Astrocyte of the cerebellum (primary cell): ENCODE measurements at regions of chr10 and their contacts with region 1.

Region 1: DNA sequence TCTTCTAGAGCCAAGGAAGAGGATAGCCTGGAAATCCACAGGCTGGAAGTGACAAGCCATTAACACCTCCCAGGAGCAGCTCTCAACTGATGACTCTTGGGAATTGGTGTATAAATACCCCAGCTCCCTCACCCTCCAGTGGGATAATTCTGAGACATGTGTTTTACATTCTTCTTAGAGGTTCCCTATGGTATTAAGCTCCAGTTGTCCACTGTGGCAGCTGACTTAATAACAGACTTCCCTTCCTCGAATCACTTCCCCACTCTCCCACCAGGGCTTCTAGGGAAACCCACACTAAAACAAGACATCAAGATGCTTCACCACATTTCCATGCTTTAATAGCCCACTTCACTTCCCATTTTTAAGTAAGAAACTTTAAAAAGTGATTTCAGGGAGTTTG is 47.2 kb downstream of the FAM107B start:
- DNase-seq: no peak
- H3K4me3 ChIP-seq: no peak overlapping the region
- CTCF ChIP-seq: no peak

Region 2: GRCh38 chr10:14688606-14689005 is 38.9 kb before region 1 on chr10:
- in situ Hi-C with region 1: loop called (anchors 5 kb)
- DNase-seq: no peak
- H3K4me3 ChIP-seq: no peak overlapping the region
- CTCF ChIP-seq: no peak

Region 3: GRCh38 chr10:15548381-15548780 is 820.9 kb after region 1 on chr10:
- in situ Hi-C with region 1: no loop called
- DNase-seq: no peak
- H3K4me3 ChIP-seq: no peak overlapping the region
- CTCF ChIP-seq: no peak